Gastrocnemius medialis (tissue), 4 donors: ENCODE measurements at regions of chr15 and their contacts with region 1.

Region 1: GRCh38 chr15:89776274-89777072 is at the start of gene MESP2:
- DNase-seq: peak; percentile 58 to 74
- ATAC-seq: peak; percentile 84 to 92
- H3K4me3 ChIP-seq: peak within 1 kb of the TSS; percentile 48 to 62 (median 48)
- H3K27ac ChIP-seq: no peak within 1 kb of the TSS
- H3K4me1 ChIP-seq: peaks cover 5 to 7% of the 10 kb centered on the region in 2 donors
- H3K27me3 ChIP-seq: no peaks in the 10 kb centered on the region
- CTCF ChIP-seq: peak; percentile 30 to 64 (median 53)
- POLR2A ChIP-seq: no peak
- total RNA-seq, gene MESP2: not detected

Region 2: GRCh38 chr15:89836255-89837133 is 60.0 kb after region 1 on chr15:
- in situ Hi-C with region 1: no loop called
- intact Hi-C with region 1: loop called (anchors 5 kb)
- DNase-seq: peak; percentile 43 to 67
- ATAC-seq: peak; percentile 93
- H3K4me3 ChIP-seq: peak overlapping the region in 2 of 4 donors; percentile 4 to 24
- H3K27ac ChIP-seq: peak overlapping the region; percentile 78 to 93 (median 80)
- H3K4me1 ChIP-seq: peaks cover 20 to 47% of the 10 kb centered on the region in 2 donors
- H3K27me3 ChIP-seq: no peaks in the 10 kb centered on the region
- CTCF ChIP-seq: no peak
- POLR2A ChIP-seq: no peak